ENCODE measurements at regions of chr11 and their contacts with region 1.

Region 1: DNA sequence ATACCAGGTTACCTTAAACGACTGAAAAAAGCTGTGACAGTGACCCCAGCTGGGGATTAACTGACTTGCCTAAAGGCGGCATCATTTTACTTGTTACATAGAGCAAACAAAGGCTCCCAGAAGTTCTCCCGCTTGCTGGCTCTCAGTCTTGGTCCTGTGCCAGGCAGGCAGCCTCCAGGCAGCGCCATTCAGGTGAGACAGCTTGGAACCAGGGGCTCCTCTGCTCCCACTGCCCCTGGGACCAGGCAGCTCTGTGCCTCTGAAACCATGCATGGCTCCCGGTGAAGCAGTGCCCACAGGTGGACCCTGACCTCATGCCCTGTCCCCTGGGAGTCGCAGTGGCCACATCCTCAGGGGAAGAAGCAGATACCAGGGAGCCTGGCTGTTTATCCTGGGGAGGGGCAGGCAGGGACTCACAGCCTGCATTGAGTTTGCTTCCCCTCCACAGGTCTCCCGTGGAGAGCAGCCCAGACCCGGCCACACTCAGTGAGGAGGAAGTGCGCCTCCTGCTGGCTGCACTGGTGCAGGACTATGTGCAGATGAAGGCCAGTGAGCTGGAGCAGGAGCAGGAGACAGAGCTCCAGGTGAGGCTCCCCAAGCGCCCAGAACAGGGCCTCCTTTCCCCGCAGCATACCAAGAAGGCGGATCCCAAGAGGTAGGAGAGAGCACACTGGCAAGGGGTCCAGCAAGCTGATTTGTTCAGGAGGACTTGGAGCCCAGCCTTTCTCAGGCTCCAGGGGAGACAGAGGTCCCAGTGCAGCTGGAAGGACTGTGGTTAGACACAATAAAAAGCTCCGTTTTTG is 15.6 kb upstream of the CYP2R1 start:
- DNase-seq: peak; percentile 89
- ATAC-seq: peak; percentile 58
- H3K4me3 Mint-ChIP-seq: peak overlapping the region; percentile 27; the same call in 1 of the 2 replicates
- H3K27ac Mint-ChIP-seq: no peak overlapping the region; the same call in 1 of the 2 replicates
- H3K4me1 Mint-ChIP-seq: peaks cover 18% of the 10 kb centered on the region
- H3K27me3 Mint-ChIP-seq: peaks cover 26% of the 10 kb centered on the region
- CTCF ChIP-seq: peak; percentile 92

Region 2: GRCh38 chr11:14537134-14537599 is 370.4 kb before region 1 on chr11:
- CTCF ChIA-PET with region 1: interaction called, 72 read pairs
- POLR2A ChIA-PET with region 1: no interaction called
- DNase-seq: no peak
- ATAC-seq: peak; percentile 58
- H3K4me3 Mint-ChIP-seq: no peak overlapping the region
- H3K27ac Mint-ChIP-seq: no peak overlapping the region
- H3K4me1 Mint-ChIP-seq: peaks cover 19% of the 10 kb centered on the region
- H3K27me3 Mint-ChIP-seq: peaks cover 4% of the 10 kb centered on the region
- CTCF ChIP-seq: peak; percentile 35; the same call in 1 of the 2 replicates

Region 3: GRCh38 chr11:14789879-14790484 is 117.6 kb before region 1 on chr11:
- CTCF ChIA-PET with region 1: interaction called, 94 read pairs
- POLR2A ChIA-PET with region 1: no interaction called
- DNase-seq: no peak
- ATAC-seq: no peak
- H3K4me3 Mint-ChIP-seq: no peak overlapping the region
- H3K27ac Mint-ChIP-seq: no peak overlapping the region
- H3K4me1 Mint-ChIP-seq: peaks cover 4% of the 10 kb centered on the region; the same call in 1 of the 2 replicates
- H3K27me3 Mint-ChIP-seq: no peaks in the 10 kb centered on the region; the same call in 1 of the 2 replicates
- CTCF ChIP-seq: no peak

Region 4: GRCh38 chr11:14924318-14924717 is 16.7 kb after region 1 on chr11:
- CTCF ChIA-PET with region 1: interaction called, 74 read pairs
- POLR2A ChIA-PET with region 1: no interaction called
- DNase-seq: no peak
- ATAC-seq: no peak
- H3K4me3 Mint-ChIP-seq: no peak overlapping the region
- H3K27ac Mint-ChIP-seq: no peak overlapping the region
- H3K4me1 Mint-ChIP-seq: no peaks in the 10 kb centered on the region
- H3K27me3 Mint-ChIP-seq: no peaks in the 10 kb centered on the region; the same call in 1 of the 2 replicates
- CTCF ChIP-seq: no peak

Region 5: DNA sequence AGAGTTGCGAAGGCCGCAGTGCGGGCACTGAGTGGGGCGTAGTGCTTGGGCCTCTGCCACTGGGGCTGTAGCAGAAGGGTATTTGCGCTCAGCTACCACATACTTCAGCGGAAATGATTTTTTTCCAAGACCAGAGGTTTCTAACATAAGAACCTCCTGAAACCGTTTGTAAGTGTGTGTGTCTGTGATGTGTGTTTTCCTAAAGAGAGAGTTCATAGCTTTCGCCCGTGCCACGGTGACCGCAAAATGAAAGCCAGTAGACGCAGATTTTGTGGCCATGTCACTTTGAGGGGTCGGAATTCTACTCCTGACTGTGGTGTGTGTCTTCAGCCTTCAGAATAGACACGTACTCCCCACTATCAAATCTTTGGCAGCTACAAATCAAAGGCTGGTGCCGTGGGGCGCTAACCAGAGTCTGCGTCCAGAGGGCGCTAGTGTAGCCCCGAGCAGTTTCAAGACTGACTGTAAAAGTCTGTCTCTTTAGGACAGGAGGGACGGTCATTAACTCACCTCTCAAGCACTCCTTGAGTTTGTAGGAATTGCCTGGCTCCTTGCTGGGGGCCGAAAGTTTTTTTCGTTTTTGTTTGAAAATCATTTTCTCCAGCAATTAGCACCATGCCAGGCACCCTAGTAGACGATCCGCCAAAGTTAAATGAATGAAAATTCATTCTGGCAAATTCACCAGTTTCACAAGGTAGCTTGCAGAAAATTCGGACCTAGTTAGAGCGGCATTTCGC is 67.1 kb after region 1 on chr11:
- CTCF ChIA-PET with region 1: interaction called, 116 read pairs
- POLR2A ChIA-PET with region 1: interaction called, 5 read pairs
- DNase-seq: peak; percentile 85
- ATAC-seq: peak; percentile 67
- H3K4me3 Mint-ChIP-seq: peak overlapping the region; percentile 67
- H3K27ac Mint-ChIP-seq: no peak overlapping the region
- H3K4me1 Mint-ChIP-seq: peaks cover 59% of the 10 kb centered on the region
- H3K27me3 Mint-ChIP-seq: peaks cover 91% of the 10 kb centered on the region
- CTCF ChIP-seq: peak; percentile 72

Region 6: DNA sequence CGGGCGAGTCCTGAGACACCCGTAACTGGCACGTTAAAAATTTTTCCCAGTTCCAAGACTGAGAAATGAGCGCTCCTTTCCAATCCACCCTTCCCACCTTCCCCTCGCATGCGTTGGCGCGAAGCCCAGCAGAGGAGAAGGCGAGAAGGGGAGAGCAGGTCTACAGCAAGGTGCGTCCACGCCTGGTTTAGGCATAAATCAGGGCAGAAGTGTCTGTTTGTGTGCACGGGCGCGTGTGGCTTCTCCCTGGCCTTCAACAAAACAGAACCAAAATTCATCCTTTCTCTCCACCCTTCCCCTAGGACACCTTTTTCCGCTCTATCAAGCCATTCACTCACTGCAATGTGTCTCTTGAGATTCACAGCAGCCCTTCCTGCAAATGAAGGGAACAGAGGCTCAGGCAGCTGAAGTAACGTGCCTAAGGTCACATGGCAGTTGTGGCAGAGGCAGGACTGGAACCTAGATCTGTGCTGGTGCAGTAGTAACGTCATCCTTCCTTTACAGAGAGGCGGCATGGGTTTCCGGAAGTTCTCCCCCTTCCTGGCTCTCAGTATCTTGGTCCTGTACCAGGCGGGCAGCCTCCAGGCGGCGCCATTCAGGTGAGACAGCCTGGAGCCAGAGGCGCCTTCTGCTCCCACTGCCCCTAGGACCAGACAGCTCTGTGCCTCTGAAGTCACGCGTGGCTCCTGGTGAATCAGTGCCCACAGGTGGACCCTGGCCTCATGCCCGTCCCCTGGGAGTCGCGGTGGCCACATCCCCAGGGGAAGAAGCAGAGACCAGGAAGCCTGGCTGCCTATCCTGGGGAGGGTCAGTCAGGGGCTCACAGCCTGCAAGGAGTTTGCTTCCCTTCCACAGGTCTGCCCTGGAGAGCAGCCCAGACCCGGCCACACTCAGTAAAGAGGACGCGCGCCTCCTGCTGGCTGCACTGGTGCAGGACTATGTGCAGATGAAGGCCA is 166.9 kb after region 1 on chr11:
- CTCF ChIA-PET with region 1: interaction called, 157 read pairs
- POLR2A ChIA-PET with region 1: no interaction called
- DNase-seq: peak; percentile 97
- ATAC-seq: peak; percentile 91
- H3K4me3 Mint-ChIP-seq: peak overlapping the region; percentile 78
- H3K27ac Mint-ChIP-seq: no peak overlapping the region
- H3K4me1 Mint-ChIP-seq: peaks cover 17% of the 10 kb centered on the region
- H3K27me3 Mint-ChIP-seq: peaks cover 51% of the 10 kb centered on the region
- CTCF ChIP-seq: peak; percentile 73

Region 7: DNA sequence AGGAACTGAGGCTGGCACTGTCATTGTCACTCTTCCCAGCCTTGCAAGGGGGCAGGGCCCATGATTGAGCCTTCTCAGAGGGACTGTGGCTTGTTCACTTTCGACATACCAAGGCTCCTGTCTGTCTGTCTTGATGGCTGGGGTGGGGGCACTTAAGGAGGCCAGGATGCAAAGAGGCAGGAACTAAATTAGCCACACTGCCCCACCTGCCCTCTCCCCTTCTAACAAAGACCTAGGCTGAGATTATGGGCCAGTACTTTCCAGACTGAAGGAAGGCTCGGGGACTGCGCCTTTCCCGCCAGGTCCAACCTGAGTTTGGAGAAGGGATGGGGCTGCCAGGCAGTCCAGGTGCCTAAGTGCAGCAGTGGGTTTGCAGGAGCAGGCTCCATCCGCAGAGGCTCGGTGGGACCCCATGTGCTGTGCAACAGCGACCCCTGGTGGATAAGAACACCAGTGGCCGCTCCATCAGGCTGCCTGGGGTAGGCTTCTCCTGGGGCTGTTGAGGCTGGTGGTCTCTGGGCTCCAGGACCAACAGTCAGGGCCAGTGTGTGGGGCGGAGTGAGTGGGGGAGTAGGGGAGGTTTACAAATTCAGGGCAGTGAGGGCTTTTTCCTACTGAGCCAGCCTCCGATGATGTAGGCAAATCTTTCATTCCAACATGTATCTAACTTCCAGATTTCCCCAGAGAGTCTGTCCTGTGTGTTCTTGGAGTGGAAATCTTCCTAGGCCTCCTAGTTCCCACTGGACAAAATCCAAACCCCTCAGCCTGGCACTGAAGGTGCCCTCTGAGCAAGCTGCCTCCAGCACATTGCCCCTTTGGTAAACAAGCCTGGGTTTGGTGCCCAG is 301.0 kb after region 1 on chr11:
- CTCF ChIA-PET with region 1: interaction called, 11 read pairs
- POLR2A ChIA-PET with region 1: no interaction called
- DNase-seq: peak; percentile 90
- ATAC-seq: peak; percentile 98
- H3K4me3 Mint-ChIP-seq: no peak overlapping the region
- H3K27ac Mint-ChIP-seq: no peak overlapping the region
- H3K4me1 Mint-ChIP-seq: no peaks in the 10 kb centered on the region
- H3K27me3 Mint-ChIP-seq: no peaks in the 10 kb centered on the region
- CTCF ChIP-seq: peak; percentile 94